ENCODE measurements at regions of chrX and their contacts with region 1.

Region 1: DNA sequence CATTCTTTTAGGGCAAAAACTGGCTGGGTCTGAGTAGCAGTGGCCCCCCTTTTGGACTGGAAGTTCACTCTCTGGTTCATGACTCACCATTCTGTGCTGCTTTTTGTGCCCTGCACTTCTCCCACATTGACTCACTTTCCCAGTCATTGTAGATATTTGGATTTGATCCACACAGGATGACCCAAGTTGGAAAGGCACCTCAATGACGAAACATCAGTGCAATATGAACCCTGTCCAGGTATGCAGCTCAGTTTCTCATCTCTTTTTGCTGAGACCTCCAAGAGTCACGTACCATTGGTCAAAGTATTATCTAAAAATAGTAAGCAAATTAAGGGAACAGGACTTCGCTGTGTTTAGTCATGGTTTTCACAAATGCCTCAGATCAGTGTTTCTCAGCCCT is 92.7 kb downstream of the CBLL2 start:
- DNase-seq: peak; percentile 95
- H3K4me3 ChIP-seq: no peak overlapping the region
- H3K27ac ChIP-seq: peak overlapping the region; percentile 61
- H3K4me1 ChIP-seq: peaks cover 10% of the 10 kb centered on the region
- H3K27me3 ChIP-seq: no peaks in the 10 kb centered on the region
- CTCF ChIP-seq: no peak

Region 2: GRCh38 chrX:22041907-22042530 is 323.4 kb before region 1 on chrX:
- CTCF ChIA-PET with region 1: no interaction called
- dilution Hi-C with region 1: no loop called
- in situ Hi-C with region 1: no loop called
- intact Hi-C with region 1: no loop called
- DNase-seq: no peak
- H3K4me3 ChIP-seq: no peak overlapping the region
- H3K27ac ChIP-seq: no peak overlapping the region
- H3K4me1 ChIP-seq: no peaks in the 10 kb centered on the region
- H3K27me3 ChIP-seq: no peaks in the 10 kb centered on the region
- CTCF ChIP-seq: no peak

Region 3: GRCh38 chrX:22246620-22247019 is 118.8 kb before region 1 on chrX:
- CTCF ChIA-PET with region 1: no interaction called
- dilution Hi-C with region 1: no loop called
- in situ Hi-C with region 1: no loop called
- intact Hi-C with region 1: loop called (anchors 2 kb)
- DNase-seq: peak; percentile 90
- H3K4me3 ChIP-seq: no peak overlapping the region
- H3K27ac ChIP-seq: peak overlapping the region; percentile 60
- H3K4me1 ChIP-seq: peaks cover 20% of the 10 kb centered on the region
- H3K27me3 ChIP-seq: no peaks in the 10 kb centered on the region
- CTCF ChIP-seq: no peak

Region 4: DNA sequence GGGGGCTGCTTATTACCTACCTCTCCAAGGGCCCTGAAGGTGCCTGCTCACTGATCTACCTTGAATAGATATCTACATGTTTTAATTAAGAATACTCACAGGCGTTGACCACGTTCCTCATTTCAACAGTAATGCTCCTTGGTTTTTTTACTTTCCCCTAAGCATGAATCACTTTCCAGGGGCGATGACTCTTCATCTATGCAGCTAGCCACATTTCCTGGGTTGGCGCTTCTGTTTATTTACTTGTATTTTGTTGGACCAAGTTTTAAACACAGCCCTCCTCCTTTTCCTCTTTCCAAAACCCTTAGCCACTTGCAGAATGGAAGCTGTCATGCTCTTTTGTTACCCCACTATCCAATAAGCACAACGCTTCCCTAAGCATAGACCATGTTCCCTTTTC is 41.9 kb before region 1 on chrX:
- CTCF ChIA-PET with region 1: no interaction called
- dilution Hi-C with region 1: no loop called
- in situ Hi-C with region 1: no loop called
- intact Hi-C with region 1: no loop called
- DNase-seq: peak; percentile 57
- H3K4me3 ChIP-seq: no peak overlapping the region
- H3K27ac ChIP-seq: no peak overlapping the region
- H3K4me1 ChIP-seq: peaks cover 8% of the 10 kb centered on the region
- H3K27me3 ChIP-seq: no peaks in the 10 kb centered on the region
- CTCF ChIP-seq: no peak